ENCODE measurements at regions of chr2 and their contacts with region 1.

Region 1: DNA sequence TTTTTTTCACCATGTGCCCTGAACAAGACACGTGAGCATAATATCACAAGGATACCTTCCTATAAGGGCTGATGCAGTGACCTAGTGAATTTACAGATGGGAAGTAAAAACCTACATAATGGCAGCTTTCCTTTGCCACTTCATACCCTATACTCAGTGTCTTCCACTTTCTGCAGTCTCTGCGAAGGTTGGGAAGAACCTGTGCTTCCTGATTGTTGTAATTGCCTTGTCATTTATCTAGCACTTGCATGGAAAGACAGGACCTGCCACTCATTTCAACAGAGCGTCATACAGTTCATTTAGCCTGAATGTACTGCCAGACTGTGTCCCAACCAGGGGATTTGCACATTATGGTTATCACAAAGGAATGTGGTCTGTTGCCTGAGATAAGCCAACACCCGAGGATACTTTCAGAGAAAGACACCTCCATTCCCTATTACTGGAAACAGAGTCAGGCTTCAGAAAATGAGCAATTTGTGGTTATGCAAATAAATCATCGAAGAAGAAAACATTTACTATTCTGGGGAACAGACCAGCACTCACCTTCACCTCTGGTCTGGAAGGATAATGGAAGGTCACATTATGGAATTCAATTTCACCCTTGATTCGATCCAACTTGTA is 55.0 kb downstream of the ABCB11 start:
- DNase-seq: no peak
- H3K4me3 Mint-ChIP-seq: no peak overlapping the region
- H3K27ac Mint-ChIP-seq: no peak overlapping the region
- H3K4me1 Mint-ChIP-seq: no peaks in the 10 kb centered on the region
- H3K27me3 Mint-ChIP-seq: no peaks in the 10 kb centered on the region

Region 2: GRCh38 chr2:168731616-168732015 is 244.5 kb before region 1 on chr2:
- intact Hi-C with region 1: no loop called
- DNase-seq: no peak
- H3K4me3 Mint-ChIP-seq: no peak overlapping the region
- H3K27ac Mint-ChIP-seq: no peak overlapping the region
- H3K4me1 Mint-ChIP-seq: peaks cover 2% of the 10 kb centered on the region
- H3K27me3 Mint-ChIP-seq: no peaks in the 10 kb centered on the region

Region 3: GRCh38 chr2:169012812-169013627 is 36.9 kb after region 1 on chr2:
- intact Hi-C with region 1: no loop called
- DNase-seq: no peak
- H3K4me3 Mint-ChIP-seq: no peak overlapping the region
- H3K27ac Mint-ChIP-seq: peak overlapping the region; percentile 70
- H3K4me1 Mint-ChIP-seq: peaks cover 7% of the 10 kb centered on the region
- H3K27me3 Mint-ChIP-seq: peaks cover 4% of the 10 kb centered on the region

Region 4: GRCh38 chr2:169462896-169463695 is 487.0 kb after region 1 on chr2:
- intact Hi-C with region 1: loop called (anchors 5 kb)
- DNase-seq: no peak
- H3K4me3 Mint-ChIP-seq: no peak overlapping the region
- H3K27ac Mint-ChIP-seq: no peak overlapping the region
- H3K4me1 Mint-ChIP-seq: peaks cover 2% of the 10 kb centered on the region
- H3K27me3 Mint-ChIP-seq: peaks cover 3% of the 10 kb centered on the region

Region 5: DNA sequence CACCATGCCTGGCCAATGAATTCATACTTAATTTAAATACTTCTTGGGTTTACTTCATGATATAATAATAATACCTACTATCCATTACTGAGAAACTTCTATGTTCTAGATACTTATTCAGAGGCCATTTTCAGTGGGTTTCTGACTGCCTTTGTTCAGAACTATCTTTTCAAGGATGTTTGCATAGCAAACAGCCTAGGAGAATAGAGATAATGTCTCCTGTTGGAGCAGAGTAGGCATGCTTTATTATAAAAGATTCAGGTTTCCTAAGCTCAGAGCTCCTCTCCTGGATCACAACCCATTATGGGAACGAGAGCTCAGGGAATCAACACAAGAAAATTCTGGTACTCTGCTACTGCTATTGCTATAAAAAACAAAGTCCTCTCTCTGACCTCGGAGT is 586.4 kb after region 1 on chr2:
- intact Hi-C with region 1: loop called (anchors 5 kb)
- DNase-seq: no peak
- H3K4me3 Mint-ChIP-seq: no peak overlapping the region
- H3K27ac Mint-ChIP-seq: no peak overlapping the region
- H3K4me1 Mint-ChIP-seq: peaks cover under 1% of the 10 kb centered on the region
- H3K27me3 Mint-ChIP-seq: no peaks in the 10 kb centered on the region